B cell (primary cell): ENCODE measurements at regions of chr15 and their contacts with region 1.

Region 1: GRCh38 chr15:64809649-64810496 is 15.6 kb downstream of the PIF1 start:
- DNase-seq: peak; percentile 78
- ATAC-seq: peak; percentile 73
- H3K4me3 ChIP-seq: no peak overlapping the region
- H3K4me3 Mint-ChIP-seq: no peak overlapping the region
- H3K27ac ChIP-seq: no peak overlapping the region
- H3K27ac Mint-ChIP-seq: peak overlapping the region; percentile 56
- H3K4me1 ChIP-seq: peaks cover 0 to 11% of the 10 kb centered on the region in 2 donors
- H3K4me1 Mint-ChIP-seq: peaks cover 13% of the 10 kb centered on the region
- H3K27me3 ChIP-seq: no peaks in the 10 kb centered on the region
- H3K27me3 Mint-ChIP-seq: no peaks in the 10 kb centered on the region
- CTCF ChIP-seq: peak; percentile 93

Region 2: DNA sequence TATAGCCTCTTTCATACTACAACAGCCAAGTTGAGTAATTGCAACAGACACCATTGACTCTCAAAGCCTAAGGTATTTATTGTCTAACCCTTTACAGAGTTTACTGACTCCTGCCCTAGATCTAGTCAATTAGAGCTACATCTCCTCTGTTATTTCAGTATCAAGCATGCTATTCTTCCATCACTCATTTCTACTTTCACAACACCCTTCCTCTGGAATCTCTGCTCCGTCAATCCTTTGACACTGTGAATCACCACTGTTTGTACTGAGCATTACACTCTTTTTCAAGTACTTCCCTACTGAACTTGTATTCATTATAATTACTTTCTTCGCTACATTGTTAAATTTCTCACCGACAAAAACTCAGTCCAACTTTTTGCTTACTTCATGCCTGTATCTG is 227.7 kb before region 1 on chr15:
- CTCF ChIA-PET with region 1: no interaction called
- POLR2A ChIA-PET with region 1: no interaction called
- intact Hi-C with region 1: no loop called
- DNase-seq: no peak
- ATAC-seq: no peak
- H3K4me3 ChIP-seq: no peak overlapping the region
- H3K4me3 Mint-ChIP-seq: no peak overlapping the region
- H3K27ac ChIP-seq: no peak overlapping the region
- H3K27ac Mint-ChIP-seq: no peak overlapping the region
- H3K4me1 ChIP-seq: no peaks in the 10 kb centered on the region
- H3K4me1 Mint-ChIP-seq: peaks cover 11% of the 10 kb centered on the region
- H3K27me3 ChIP-seq: no peaks in the 10 kb centered on the region
- H3K27me3 Mint-ChIP-seq: no peaks in the 10 kb centered on the region
- CTCF ChIP-seq: no peak

Region 3: DNA sequence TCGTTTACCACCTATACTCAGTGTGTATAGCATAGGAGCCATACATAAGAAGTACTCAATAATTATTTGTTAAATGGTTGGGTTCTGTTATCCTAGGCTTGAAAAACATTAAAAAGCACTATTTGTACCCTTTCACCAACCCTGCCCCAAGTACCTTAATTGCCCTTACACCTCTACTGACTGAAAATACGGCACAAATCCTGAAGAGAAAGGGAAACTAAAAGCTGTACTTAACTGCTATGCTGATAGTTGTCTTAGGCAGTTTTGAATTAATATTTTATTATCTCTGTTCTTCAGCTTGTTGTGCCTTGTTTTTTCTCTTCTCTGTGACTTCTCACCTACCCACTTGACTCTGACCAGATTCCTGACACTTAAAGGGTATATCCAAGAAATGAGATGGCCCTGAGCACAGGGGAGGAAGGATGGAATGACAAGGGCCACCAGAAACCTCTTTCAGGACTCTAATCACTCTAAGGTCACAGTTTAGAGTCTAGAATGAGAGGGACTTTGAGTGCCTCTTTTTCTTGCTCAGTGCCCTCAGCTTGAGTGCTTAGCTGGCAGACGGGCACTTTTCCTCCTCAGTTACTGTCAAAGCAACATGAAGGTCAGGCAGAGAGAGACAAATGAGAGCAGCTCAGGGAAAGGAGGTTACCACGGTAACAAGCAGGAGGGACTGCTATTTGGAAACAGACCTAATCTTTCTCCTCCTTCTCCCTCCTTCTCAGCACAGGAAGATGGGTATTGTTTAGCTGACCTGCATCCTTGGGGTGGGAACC is 213.0 kb before region 1 on chr15:
- CTCF ChIA-PET with region 1: no interaction called
- POLR2A ChIA-PET with region 1: no interaction called
- intact Hi-C with region 1: no loop called
- DNase-seq: peak; percentile 35
- ATAC-seq: no peak
- H3K4me3 ChIP-seq: peak overlapping the region in 4 of 5 experiments; percentile 5 to 58 (median 30)
- H3K4me3 Mint-ChIP-seq: peak overlapping the region; percentile 75
- H3K27ac ChIP-seq: peak overlapping the region in 1 of 2 donors; percentile 66
- H3K27ac Mint-ChIP-seq: peak overlapping the region; percentile 78
- H3K4me1 ChIP-seq: peaks cover 18 to 21% of the 10 kb centered on the region in 2 donors
- H3K4me1 Mint-ChIP-seq: peaks cover 46% of the 10 kb centered on the region
- H3K27me3 ChIP-seq: no peaks in the 10 kb centered on the region
- H3K27me3 Mint-ChIP-seq: no peaks in the 10 kb centered on the region
- CTCF ChIP-seq: no peak

Region 4: DNA sequence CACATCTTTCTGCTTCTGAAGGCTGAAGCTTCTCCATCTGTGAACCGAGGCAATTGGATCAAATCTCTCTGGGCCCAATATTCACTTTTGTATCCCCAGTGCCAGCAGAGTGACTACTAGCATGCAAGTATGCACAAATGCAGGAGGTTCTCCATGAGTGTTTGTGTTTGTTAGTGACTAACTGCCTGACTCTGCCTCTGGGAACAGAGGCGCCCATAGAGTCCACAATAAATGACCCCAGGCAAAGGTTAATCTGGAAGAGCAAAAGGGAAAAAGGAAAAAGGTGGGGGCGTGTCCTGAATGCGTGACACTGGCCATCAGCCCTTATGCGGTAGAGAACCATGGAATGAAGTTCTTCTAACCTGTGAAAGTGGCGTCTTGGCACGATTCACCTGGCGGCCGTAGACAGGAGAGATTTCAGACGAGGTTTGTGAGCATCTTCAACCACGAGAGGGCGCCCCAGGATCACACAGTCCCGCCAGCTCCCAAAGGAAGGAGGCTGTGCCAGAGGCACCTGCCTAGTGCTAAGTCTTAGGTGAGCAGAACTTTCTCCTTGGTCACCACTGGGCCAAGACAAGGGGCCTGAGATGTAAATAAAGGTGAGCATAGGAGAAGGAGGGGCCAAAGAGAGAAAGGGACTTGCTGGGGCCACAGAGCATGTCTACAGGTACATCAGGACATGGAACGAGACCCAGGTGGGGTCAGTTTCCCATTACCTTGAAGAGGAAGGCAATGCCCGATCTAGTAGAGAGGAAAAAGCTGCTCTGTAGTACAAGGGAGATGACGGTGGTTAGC is 78.7 kb before region 1 on chr15:
- CTCF ChIA-PET with region 1: interaction called, 236 read pairs
- POLR2A ChIA-PET with region 1: no interaction called
- intact Hi-C with region 1: loop called (anchors 1 kb)
- DNase-seq: peak; percentile 88
- ATAC-seq: peak; percentile 75
- H3K4me3 ChIP-seq: no peak overlapping the region
- H3K4me3 Mint-ChIP-seq: no peak overlapping the region
- H3K27ac ChIP-seq: no peak overlapping the region
- H3K27ac Mint-ChIP-seq: peak overlapping the region; percentile 46
- H3K4me1 ChIP-seq: peaks cover 4 to 7% of the 10 kb centered on the region in 2 donors
- H3K4me1 Mint-ChIP-seq: peaks cover 10% of the 10 kb centered on the region
- H3K27me3 ChIP-seq: peaks cover 0 to 7% (median 2%) of the 10 kb centered on the region in 4 experiments
- H3K27me3 Mint-ChIP-seq: peaks cover 6% of the 10 kb centered on the region
- CTCF ChIP-seq: peak; percentile 94

Region 5: GRCh38 chr15:64767203-64767602 is 42.7 kb before region 1 on chr15:
- CTCF ChIA-PET with region 1: interaction called, 12 read pairs
- POLR2A ChIA-PET with region 1: no interaction called
- intact Hi-C with region 1: no loop called
- DNase-seq: no peak
- ATAC-seq: peak; percentile 45
- H3K4me3 ChIP-seq: no peak overlapping the region
- H3K4me3 Mint-ChIP-seq: no peak overlapping the region
- H3K27ac ChIP-seq: no peak overlapping the region
- H3K27ac Mint-ChIP-seq: no peak overlapping the region
- H3K4me1 ChIP-seq: peaks cover 10 to 32% of the 10 kb centered on the region in 2 donors
- H3K4me1 Mint-ChIP-seq: peaks cover 26% of the 10 kb centered on the region
- H3K27me3 ChIP-seq: no peaks in the 10 kb centered on the region
- H3K27me3 Mint-ChIP-seq: no peaks in the 10 kb centered on the region
- CTCF ChIP-seq: no peak

Region 6: DNA sequence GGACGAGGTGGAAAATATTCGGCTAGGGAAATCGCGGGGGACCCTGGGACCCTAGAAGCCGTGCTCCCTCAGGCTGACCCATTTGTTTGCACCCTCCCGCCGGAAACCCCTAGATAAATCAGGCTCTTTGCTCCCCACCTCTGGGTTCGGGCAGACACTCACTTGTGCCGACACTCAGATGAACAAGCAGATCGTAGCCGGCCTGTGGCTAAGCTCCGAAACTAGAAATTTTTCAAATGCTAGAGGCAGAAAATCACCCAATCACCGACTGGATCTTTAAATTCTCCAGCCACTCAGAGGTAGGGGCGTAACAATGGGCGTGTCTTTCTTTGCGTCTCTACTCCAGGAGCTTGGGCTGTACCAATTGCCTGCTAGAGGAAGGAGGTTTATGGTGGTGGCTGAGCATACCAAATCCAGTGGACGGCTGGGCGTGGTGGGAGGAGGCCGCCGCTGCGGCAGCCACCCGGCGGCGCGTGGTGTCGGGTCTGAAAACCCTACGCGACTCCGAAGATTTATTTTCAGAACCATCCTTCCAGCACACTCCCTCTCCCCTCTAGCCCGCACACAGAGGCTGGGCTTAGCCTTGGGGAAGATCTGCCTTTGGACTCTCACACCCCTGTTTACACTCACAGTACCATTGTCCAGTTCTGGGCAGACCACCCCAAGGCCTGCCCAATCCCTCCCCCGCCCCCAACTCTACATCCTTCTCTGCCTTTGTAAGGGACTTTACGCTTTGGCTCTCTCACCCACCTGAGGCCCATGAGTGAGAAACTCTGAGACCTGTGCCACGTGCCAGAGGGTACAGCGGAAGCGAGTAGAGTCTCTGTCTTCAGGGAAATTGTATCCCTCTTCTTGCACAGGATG is 15.8 kb after region 1 on chr15 and contains the start of gene PIF1:
- CTCF ChIA-PET with region 1: interaction called, 12 read pairs
- POLR2A ChIA-PET with region 1: no interaction called
- intact Hi-C with region 1: no loop called
- DNase-seq: peak; percentile 94
- ATAC-seq: peak; percentile 95
- H3K4me3 ChIP-seq: peak within 1 kb of the TSS; percentile 42 to 73 (median 56)
- H3K4me3 Mint-ChIP-seq: peak within 1 kb of the TSS; percentile 91
- H3K27ac ChIP-seq: peak within 1 kb of the TSS; percentile 31 to 73
- H3K27ac Mint-ChIP-seq: peak within 1 kb of the TSS; percentile 89
- H3K4me1 ChIP-seq: peaks cover 22 to 33% of the 10 kb centered on the region in 2 donors
- H3K4me1 Mint-ChIP-seq: peaks cover 31% of the 10 kb centered on the region
- H3K27me3 ChIP-seq: peaks cover 0 to 14% (median 2%) of the 10 kb centered on the region in 4 experiments
- H3K27me3 Mint-ChIP-seq: no peaks in the 10 kb centered on the region
- CTCF ChIP-seq: no peak
- total RNA-seq, gene PIF1: 2.0 and 2.8 TPM in 2 replicates

Region 7: GRCh38 chr15:64893481-64894394 is 83.9 kb after region 1 on chr15:
- CTCF ChIA-PET with region 1: interaction called, 30 read pairs
- POLR2A ChIA-PET with region 1: no interaction called
- intact Hi-C with region 1: no loop called
- DNase-seq: peak; percentile 96
- ATAC-seq: peak; percentile 77
- H3K4me3 ChIP-seq: peak overlapping the region; percentile 32 to 71 (median 37)
- H3K4me3 Mint-ChIP-seq: peak overlapping the region; percentile 90
- H3K27ac ChIP-seq: peak overlapping the region; percentile 86 to 94
- H3K27ac Mint-ChIP-seq: peak overlapping the region; percentile 99
- H3K4me1 ChIP-seq: peaks cover 50 to 65% of the 10 kb centered on the region in 2 donors
- H3K4me1 Mint-ChIP-seq: peaks cover 68% of the 10 kb centered on the region
- H3K27me3 ChIP-seq: no peaks in the 10 kb centered on the region
- H3K27me3 Mint-ChIP-seq: no peaks in the 10 kb centered on the region
- CTCF ChIP-seq: no peak

Region 8: GRCh38 chr15:64930778-64931371 is 121.0 kb after region 1 on chr15:
- CTCF ChIA-PET with region 1: no interaction called
- POLR2A ChIA-PET with region 1: no interaction called
- intact Hi-C with region 1: no loop called
- DNase-seq: no peak
- ATAC-seq: no peak
- H3K4me3 ChIP-seq: no peak overlapping the region
- H3K4me3 Mint-ChIP-seq: no peak overlapping the region
- H3K27ac ChIP-seq: no peak overlapping the region
- H3K27ac Mint-ChIP-seq: no peak overlapping the region
- H3K4me1 ChIP-seq: peaks cover 5 to 9% of the 10 kb centered on the region in 2 donors
- H3K4me1 Mint-ChIP-seq: peaks cover 18% of the 10 kb centered on the region
- H3K27me3 ChIP-seq: no peaks in the 10 kb centered on the region
- H3K27me3 Mint-ChIP-seq: no peaks in the 10 kb centered on the region
- CTCF ChIP-seq: no peak